ENCODE measurements at regions of chr4 and their contacts with region 1.

Region 1: DNA sequence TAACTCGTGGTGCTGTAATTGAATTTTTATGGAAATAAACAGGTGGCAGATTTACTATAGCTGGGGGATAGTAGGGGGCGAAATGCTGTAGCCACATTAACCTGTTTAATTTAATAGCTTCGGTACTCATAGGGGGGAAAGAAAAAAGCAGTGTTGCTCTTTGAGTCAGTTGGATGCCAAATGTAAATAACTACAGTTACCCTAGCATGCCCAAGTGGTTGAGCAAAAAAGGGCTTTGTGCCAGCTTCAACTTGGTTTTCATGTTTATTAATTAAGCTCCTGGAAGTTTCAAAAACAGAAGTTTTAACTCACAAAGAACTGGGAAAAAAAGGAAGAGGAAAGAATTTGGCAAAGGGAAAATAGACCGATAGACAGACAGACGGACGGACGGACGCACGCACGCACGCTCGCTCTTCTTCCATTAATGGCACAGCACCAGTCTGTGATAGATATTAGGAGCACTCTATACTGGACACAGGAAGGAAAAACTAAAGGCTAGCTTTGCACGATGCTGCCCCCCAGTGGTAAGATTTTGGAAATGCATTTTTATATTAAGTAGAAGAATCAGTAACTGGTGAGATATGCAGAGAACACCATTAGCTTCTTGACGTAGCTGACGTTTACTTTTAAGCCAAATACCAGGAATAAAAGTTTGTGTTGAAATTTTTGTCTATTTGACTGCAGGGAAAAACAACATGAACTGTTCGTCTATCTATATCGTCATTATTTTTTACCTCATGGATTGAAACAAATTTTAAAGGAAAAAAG is 151.8 kb downstream of the SLC7A11 start:
- DNase-seq: peak; percentile 30
- ATAC-seq: peak; percentile 45
- H3K4me3 Mint-ChIP-seq: no peak overlapping the region
- H3K27ac Mint-ChIP-seq: no peak overlapping the region
- H3K4me1 Mint-ChIP-seq: no peaks in the 10 kb centered on the region
- H3K27me3 Mint-ChIP-seq: no peaks in the 10 kb centered on the region
- CTCF ChIP-seq: peak; percentile 73

Region 2: GRCh38 chr4:138111456-138112000 is 21.2 kb after region 1 on chr4:
- CTCF ChIA-PET with region 1: interaction called, 11 read pairs
- POLR2A ChIA-PET with region 1: no interaction called
- intact Hi-C with region 1: no loop called
- DNase-seq: no peak
- ATAC-seq: no peak
- H3K4me3 Mint-ChIP-seq: no peak overlapping the region
- H3K27ac Mint-ChIP-seq: no peak overlapping the region
- H3K4me1 Mint-ChIP-seq: no peaks in the 10 kb centered on the region
- H3K27me3 Mint-ChIP-seq: no peaks in the 10 kb centered on the region
- CTCF ChIP-seq: no peak